K562 (cell line): ENCODE measurements at regions of chr10 and their contacts with region 1.

Region 1: GRCh38 chr10:79542626-79543025 is 17.6 kb downstream of the SFTPA2 start:
- DNase-seq: no peak
- ATAC-seq: no peak
- H3K4me3 ChIP-seq: no peak overlapping the region
- H3K27ac ChIP-seq: no peak overlapping the region
- H3K4me1 ChIP-seq: no peaks in the 10 kb centered on the region
- H3K27me3 ChIP-seq: peaks cover 0 to 11% of the 10 kb centered on the region in 2 experiments; a peak in 3 of 5 replicates
- CTCF ChIP-seq: no peak
- EP300 ChIP-seq: no peak
- POLR2A ChIP-seq: no peak
- RAD21 ChIP-seq: no peak

Region 2: GRCh38 chr10:79331709-79332108 is 210.9 kb before region 1 on chr10:
- CTCF ChIA-PET with region 1: no interaction called
- POLR2A ChIA-PET with region 1: no interaction called
- in situ Hi-C with region 1: no loop called
- intact Hi-C with region 1: no loop called
- DNase-seq: peak in 1 of 4 experiments; percentile 33
- ATAC-seq: no peak
- H3K4me3 ChIP-seq: no peak overlapping the region
- H3K27ac ChIP-seq: no peak overlapping the region
- H3K4me1 ChIP-seq: no peaks in the 10 kb centered on the region
- H3K27me3 ChIP-seq: peaks cover 11 to 49% of the 10 kb centered on the region in 2 experiments
- CTCF ChIP-seq: no peak
- EP300 ChIP-seq: no peak
- POLR2A ChIP-seq: no peak
- RAD21 ChIP-seq: no peak

Region 3: DNA sequence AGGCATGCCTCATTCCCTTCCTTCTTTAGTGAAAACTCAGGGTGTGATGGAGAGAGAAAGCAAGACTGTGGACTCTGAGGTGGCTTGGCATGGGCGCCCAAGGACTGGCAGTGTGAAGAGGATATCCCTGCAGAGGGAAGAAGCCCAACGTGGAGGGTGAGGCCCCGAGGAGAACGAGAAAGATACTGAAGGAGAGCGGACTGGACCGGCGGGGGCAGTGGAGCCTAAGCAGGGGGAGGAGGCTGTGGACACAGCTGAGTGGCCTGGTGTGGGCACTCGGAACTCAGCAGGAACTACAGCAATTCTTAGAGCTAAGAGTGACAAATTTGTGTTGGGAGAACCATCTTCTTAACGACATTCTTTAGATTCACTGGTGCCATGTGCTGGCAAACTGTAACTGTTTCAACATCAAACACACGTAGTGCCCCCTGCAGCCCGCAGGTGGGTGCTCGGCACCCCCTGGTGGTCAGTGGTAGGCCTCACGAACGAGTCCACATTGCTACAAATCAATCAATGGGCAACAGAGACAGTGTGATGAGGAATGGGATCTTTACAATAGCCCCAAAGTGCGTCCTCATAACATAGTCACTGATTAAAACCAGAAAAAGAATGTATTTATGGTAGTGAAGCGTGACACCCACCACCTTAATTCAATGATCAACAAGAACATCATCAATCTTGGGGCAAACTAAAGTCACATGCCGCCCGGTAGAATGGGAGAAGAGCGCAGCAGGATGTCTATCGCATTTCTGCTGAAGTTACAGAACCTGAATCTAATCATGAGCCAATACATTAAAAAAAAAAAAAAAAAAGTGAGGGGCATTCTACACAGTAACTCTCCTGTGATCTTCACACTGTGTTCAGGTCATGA is 66.1 kb after region 1 on chr10:
- CTCF ChIA-PET with region 1: interaction called, 5 read pairs
- POLR2A ChIA-PET with region 1: no interaction called
- in situ Hi-C with region 1: no loop called
- intact Hi-C with region 1: loop called (anchors 2 kb)
- DNase-seq: peak; percentile 56 to 70 (median 66)
- ATAC-seq: peak; percentile 92
- H3K4me3 ChIP-seq: no peak overlapping the region
- H3K27ac ChIP-seq: no peak overlapping the region
- H3K4me1 ChIP-seq: no peaks in the 10 kb centered on the region
- H3K27me3 ChIP-seq: peaks cover 0 to 32% of the 10 kb centered on the region in 2 experiments; a peak in 4 of 5 replicates
- CTCF ChIP-seq: peak; percentile 89 to 98 (median 92)
- EP300 ChIP-seq: no peak
- POLR2A ChIP-seq: no peak
- RAD21 ChIP-seq: peak; percentile 24 to 84; a peak in 2 of 4 replicates

Region 4: GRCh38 chr10:79929409-79929904 is 386.8 kb after region 1 on chr10:
- CTCF ChIA-PET with region 1: interaction called, 5 read pairs
- POLR2A ChIA-PET with region 1: no interaction called
- in situ Hi-C with region 1: no loop called
- intact Hi-C with region 1: loop called (anchors 5 kb)
- DNase-seq: peak; percentile 83 to 90 (median 88)
- ATAC-seq: peak; percentile 97
- H3K4me3 ChIP-seq: no peak overlapping the region
- H3K27ac ChIP-seq: no peak overlapping the region
- H3K4me1 ChIP-seq: peaks cover 3 to 4% of the 10 kb centered on the region in 2 experiments; a peak in 3 of 5 replicates
- H3K27me3 ChIP-seq: peaks cover 26 to 37% of the 10 kb centered on the region in 2 experiments
- CTCF ChIP-seq: peak; percentile 93 to 98 (median 97)
- EP300 ChIP-seq: no peak
- POLR2A ChIP-seq: no peak
- RAD21 ChIP-seq: peak; percentile 99

Region 5: GRCh38 chr10:80122746-80123145 is 580.1 kb after region 1 on chr10:
- CTCF ChIA-PET with region 1: no interaction called
- POLR2A ChIA-PET with region 1: no interaction called
- in situ Hi-C with region 1: loop called (anchors 10 kb)
- intact Hi-C with region 1: loop called (anchors 10 kb)
- DNase-seq: no peak
- ATAC-seq: no peak
- H3K4me3 ChIP-seq: no peak overlapping the region
- H3K27ac ChIP-seq: no peak overlapping the region
- H3K4me1 ChIP-seq: no peaks in the 10 kb centered on the region
- H3K27me3 ChIP-seq: peaks cover 8 to 13% of the 10 kb centered on the region in 2 experiments
- CTCF ChIP-seq: no peak
- EP300 ChIP-seq: no peak
- POLR2A ChIP-seq: no peak
- RAD21 ChIP-seq: no peak